ENCODE measurements at regions of chr20 and their contacts with region 1.

Region 1: DNA sequence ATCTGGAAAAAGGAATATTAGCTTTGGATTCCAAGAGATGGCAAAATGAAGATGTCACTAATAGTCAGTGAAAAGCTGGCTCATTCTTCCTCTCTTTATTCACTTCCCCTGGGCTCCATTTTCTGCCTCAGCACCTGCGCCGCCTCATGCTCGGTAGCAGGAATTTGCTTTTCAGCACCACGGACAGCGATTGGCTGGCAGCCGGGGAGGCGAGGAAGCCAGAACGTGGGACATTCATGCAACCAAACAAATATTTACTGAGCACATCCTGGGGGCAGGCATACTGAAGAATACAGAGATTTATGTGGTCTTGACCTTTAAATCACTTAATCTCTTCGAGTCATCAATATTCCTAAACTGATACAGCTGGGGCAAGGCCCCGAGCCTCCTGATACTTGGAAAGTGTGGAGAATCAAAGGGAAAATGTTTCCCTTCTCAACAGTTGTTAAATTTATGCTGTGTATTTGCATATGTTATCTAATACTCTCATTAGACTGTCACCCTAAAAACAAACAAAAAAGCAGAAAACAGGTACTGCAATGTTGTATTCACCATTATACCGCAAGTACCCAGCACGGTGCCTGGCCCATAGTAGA is 12.1 kb upstream of the PDYN start:
- H3K4me3 ChIP-seq: no peak overlapping the region
- H3K27ac ChIP-seq: no peak overlapping the region
- H3K4me1 ChIP-seq: no peaks in the 10 kb centered on the region
- CTCF ChIP-seq: no peak

Region 2: DNA sequence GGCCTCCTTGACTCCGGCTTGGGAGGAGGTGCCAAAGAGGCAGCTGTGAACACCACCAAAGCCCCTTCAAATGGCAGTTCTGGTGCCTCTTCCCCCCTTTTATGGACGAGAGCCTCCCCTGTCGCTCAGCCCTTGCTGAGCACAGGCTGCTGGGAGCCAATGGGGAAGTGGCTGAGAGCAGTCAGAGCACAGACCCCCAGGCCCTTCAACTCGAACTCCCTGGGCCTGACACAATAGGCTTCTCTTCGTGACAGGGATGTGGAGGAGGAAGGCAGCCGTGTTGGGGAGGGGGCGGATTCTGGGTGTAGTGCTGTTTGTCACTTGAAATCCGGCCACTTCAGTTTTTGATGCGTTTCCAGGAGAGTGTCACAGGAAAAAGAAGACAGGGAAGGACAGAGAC is 11.9 kb before region 1 on chr20 and contains the start of gene PDYN:
- CTCF ChIA-PET with region 1: interaction called, 14 read pairs
- POLR2A ChIA-PET with region 1: no interaction called
- H3K4me3 ChIP-seq: no peak within 1 kb of the TSS
- H3K27ac ChIP-seq: no peak within 1 kb of the TSS
- H3K4me1 ChIP-seq: no peaks in the 10 kb centered on the region
- CTCF ChIP-seq: no peak

Region 3: GRCh38 chr20:2022163-2022562 is 16.2 kb after region 1 on chr20:
- CTCF ChIA-PET with region 1: interaction called, 36 read pairs
- POLR2A ChIA-PET with region 1: no interaction called
- H3K4me3 ChIP-seq: no peak overlapping the region
- H3K27ac ChIP-seq: no peak overlapping the region
- H3K4me1 ChIP-seq: no peaks in the 10 kb centered on the region
- CTCF ChIP-seq: no peak

Region 4: GRCh38 chr20:2045101-2045500 is 39.2 kb after region 1 on chr20:
- CTCF ChIA-PET with region 1: interaction called, 16 read pairs
- POLR2A ChIA-PET with region 1: no interaction called
- H3K4me3 ChIP-seq: no peak overlapping the region
- H3K27ac ChIP-seq: no peak overlapping the region
- H3K4me1 ChIP-seq: no peaks in the 10 kb centered on the region
- CTCF ChIP-seq: no peak

Measured in HEK293 (cell line).